Activated naive CD4-positive, alpha-beta T cell treated with anti-CD3 and anti-CD28 coated beads for 36 hours (primary cell): ENCODE measurements at regions of chr2 and their contacts with region 1.

Region 1: DNA sequence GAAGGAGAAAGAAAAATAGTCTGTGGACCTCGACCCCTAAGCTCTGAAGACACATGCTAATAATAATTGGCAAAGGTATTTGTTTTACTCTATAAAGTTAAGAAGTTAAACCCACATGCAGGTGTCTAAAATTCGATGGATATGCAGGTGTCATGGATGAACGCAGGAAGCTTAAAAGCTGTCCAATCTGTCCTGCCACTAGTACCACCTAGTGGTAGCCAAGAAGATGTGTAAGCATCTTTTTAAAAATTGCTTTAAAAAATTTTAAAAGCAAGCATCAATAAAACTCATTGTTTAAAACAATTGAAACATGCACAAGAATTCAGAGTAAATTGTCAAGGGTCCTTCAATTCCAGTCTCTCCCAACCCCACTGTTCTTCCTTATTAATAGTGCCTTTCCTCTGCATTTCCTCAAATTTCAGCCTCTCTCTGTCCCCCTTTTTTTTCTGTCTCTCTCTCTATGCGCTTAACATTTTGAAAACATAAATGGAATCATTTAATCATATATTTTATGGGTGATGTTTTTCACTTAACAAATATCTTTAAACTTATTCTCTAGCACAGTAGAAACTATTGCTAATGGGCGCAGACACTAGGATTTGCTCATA is 30.6 kb upstream of the PPP3R1 start:
- DNase-seq: peak; percentile 18
- H3K4me3 Mint-ChIP-seq: no peak overlapping the region
- H3K27ac Mint-ChIP-seq: no peak overlapping the region
- H3K4me1 Mint-ChIP-seq: no peaks in the 10 kb centered on the region
- H3K27me3 Mint-ChIP-seq: peaks cover 2% of the 10 kb centered on the region

Region 2: DNA sequence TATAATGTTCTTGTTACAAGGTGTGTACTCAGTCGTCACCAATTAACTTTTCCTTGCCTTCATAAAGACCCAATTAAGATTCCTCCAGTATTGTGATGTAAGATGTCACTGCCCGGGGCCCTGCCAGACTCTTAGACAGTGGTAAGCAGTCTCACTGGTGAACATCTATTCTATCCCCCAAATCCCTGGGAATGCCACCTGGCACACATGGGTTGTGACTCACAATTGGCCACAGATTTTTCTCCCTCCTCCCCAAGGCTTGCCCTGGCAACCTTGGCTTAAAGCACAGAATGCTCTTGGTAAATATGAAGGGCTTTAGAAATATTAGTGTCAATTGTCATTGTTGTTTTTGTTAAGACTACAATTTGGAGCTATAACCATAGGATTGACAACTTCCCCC is 597.9 kb before region 1 on chr2:
- CTCF ChIA-PET with region 1: no interaction called
- intact Hi-C with region 1: no loop called
- DNase-seq: no peak
- H3K4me3 Mint-ChIP-seq: no peak overlapping the region
- H3K27ac Mint-ChIP-seq: no peak overlapping the region
- H3K4me1 Mint-ChIP-seq: no peaks in the 10 kb centered on the region
- H3K27me3 Mint-ChIP-seq: peaks cover 4% of the 10 kb centered on the region

Region 3: GRCh38 chr2:68295516-68295915 is 12.6 kb after region 1 on chr2:
- CTCF ChIA-PET with region 1: interaction called, 14 read pairs
- intact Hi-C with region 1: no loop called
- DNase-seq: no peak
- H3K4me3 Mint-ChIP-seq: no peak overlapping the region
- H3K27ac Mint-ChIP-seq: no peak overlapping the region
- H3K4me1 Mint-ChIP-seq: no peaks in the 10 kb centered on the region
- H3K27me3 Mint-ChIP-seq: peaks cover 8% of the 10 kb centered on the region

Region 4: DNA sequence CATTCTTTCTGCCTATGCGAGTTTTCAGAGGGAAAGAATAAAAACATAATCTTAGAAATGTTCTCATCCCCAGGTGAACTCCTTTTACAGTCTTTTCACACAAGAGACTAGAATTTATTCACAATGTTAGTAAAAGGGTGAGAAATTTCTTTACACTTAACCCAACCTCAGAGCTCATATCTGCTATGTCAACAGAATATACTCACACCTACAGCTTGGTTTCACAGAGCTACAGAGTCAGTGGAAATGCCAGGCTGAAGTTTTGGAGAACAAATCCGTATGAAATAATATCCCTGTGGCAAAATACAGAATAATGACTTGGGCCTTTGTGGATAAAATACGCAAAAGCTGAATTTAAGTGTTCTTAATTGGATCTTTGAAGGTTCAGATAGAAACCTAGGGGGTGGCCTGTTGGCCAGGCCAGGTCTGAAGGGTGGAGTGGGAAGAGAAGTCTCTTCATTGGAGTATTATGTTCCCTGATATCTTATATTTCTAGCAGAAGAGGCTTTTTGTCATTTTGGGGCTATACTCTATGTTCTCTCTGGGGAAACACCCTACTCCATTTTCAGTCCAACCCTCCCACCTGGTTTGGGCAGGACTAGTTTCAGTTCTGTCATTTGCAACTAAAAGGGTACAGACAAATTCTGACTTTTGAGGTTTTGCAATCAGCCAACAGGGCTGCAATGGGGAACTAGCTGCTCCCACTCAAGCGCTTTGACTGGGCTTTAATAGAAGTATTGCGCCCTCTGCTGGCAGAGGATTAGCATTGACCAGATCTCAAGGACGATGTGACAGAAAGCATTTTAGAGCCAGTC is 158.5 kb after region 1 on chr2:
- CTCF ChIA-PET with region 1: interaction called, 4 read pairs
- intact Hi-C with region 1: loop called (anchors 2 kb)
- DNase-seq: peak; percentile 92
- H3K4me3 Mint-ChIP-seq: no peak overlapping the region
- H3K27ac Mint-ChIP-seq: peak overlapping the region; percentile 28
- H3K4me1 Mint-ChIP-seq: peaks cover 15% of the 10 kb centered on the region
- H3K27me3 Mint-ChIP-seq: peaks cover 2% of the 10 kb centered on the region